ENCODE measurements at regions of chr16 and their contacts with region 1.

Region 1: DNA sequence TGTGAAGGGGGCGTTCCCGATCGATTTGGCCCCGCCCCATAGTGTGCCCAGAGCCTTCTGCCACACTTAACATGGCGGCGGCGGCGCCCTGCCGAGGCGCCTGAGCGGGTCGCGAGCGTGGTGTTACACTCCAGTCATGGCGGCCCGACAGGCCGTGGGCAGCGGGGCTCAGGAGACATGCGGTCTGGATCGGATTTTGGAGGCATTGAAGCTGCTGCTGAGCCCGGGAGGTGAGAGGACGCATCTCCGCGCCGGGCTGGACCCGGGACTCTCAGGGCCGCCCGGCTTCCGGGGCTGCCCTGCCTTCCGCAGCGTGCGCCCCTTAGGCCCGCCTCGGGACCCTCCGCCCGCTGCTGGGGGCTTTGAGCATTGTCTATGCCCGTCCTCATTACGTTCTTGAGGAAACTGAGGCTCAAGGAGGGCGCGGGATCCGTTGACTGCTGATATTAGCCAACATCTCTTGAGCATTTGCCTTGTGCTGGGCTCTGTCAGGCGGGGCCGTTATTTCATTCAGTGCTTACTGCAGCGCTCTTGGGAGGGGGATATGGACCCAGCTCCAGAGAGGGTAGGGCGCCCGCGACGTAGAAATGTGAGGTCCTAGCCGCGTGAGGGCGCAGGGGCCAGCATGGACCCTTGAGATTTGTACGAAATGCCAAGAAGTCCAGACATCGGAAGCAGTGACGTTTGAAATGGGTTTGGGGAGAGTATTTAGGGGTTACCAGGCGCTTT is at the start of gene TANGO6:
- DNase-seq: no peak
- H3K4me3 ChIP-seq: peak within 1 kb of the TSS; percentile 89
- H3K27ac ChIP-seq: peak within 1 kb of the TSS; percentile 85
- H3K27me3 ChIP-seq: no peaks in the 10 kb centered on the region
- CTCF ChIP-seq: peak; percentile 49
- polyA plus RNA-seq, gene TANGO6: 11.6 and 16.2 TPM in 2 replicates

Region 2: GRCh38 chr16:68528686-68529379 is 314.8 kb before region 1 on chr16:
- CTCF ChIA-PET with region 1: interaction called, 23 read pairs
- POLR2A ChIA-PET with region 1: no interaction called
- DNase-seq: peak; percentile 44
- H3K4me3 ChIP-seq: no peak overlapping the region
- H3K27ac ChIP-seq: no peak overlapping the region
- H3K27me3 ChIP-seq: no peaks in the 10 kb centered on the region
- CTCF ChIP-seq: peak; percentile 83

Region 3: GRCh38 chr16:68800257-68800875 is 43.3 kb before region 1 on chr16:
- CTCF ChIA-PET with region 1: interaction called, 14 read pairs
- POLR2A ChIA-PET with region 1: no interaction called
- DNase-seq: peak; percentile 66
- H3K4me3 ChIP-seq: no peak overlapping the region
- H3K27ac ChIP-seq: no peak overlapping the region
- H3K27me3 ChIP-seq: peaks cover 6% of the 10 kb centered on the region
- CTCF ChIP-seq: peak; percentile 89

Region 4: DNA sequence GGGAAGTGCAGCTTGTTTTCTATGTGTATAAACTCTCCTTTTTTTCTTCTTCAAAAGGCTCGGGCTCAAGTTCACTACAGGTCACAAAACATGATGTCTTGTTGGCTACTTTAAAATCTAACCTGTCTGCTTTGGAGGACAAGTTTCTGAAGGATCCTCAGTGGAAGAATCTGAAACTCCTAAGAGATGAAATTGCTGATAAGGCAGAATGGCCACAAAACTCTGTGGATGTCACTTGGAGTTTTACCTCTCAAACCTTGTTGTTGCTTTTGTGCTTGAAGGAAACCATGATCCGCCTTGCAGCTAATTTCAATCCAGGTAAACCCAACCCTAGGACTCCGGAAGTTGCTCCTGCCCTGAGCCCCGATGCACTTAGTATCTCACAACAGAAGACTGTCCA is 16.2 kb after region 1 on chr16:
- CTCF ChIA-PET with region 1: interaction called, 16 read pairs
- POLR2A ChIA-PET with region 1: no interaction called
- DNase-seq: no peak
- H3K4me3 ChIP-seq: no peak overlapping the region
- H3K27ac ChIP-seq: no peak overlapping the region
- H3K27me3 ChIP-seq: no peaks in the 10 kb centered on the region
- CTCF ChIP-seq: no peak

Region 5: DNA sequence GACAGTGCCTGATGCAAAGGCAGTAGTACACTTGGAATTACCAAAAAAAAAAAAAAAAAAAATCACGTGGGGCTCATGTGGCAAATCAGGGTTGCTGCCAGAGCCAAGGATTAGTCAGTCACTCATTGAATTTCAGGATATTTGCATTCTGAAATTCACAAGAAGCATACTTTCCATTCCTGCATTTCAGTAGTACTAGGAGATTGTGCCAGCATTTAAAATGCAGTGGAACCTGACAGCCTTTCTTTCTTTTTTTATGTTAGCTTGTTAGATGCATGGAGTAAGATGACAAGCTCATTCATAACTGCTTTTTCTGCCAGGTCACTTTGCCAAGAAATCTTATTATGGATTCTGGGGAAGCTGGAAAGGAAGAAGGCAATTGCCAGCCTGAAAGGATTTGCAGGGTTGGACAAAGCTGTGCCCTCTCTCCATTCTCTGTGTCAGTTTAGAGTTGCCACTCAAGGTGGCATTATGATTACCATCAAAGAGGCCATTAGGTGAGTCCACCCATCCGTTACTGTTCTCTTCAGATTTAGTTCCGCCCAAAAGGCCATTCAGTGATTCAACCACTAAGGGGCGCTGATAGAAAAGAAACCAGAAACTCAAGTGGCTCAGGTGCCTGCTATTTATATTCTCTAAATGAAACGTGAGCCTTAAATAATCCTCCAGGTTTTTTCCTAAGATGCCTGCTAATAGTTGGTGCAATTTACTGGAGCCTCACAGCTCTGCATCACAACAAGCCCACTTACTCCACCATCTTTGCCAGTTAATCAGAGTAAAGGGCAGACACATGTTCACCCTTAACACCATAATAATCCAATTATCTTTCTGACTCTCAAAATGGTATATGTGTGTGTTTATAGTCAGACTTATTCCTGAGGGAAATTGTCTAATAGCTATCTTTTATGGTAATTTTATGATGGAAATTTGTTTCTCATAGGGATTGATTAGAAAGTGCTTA is 58.6 kb after region 1 on chr16:
- CTCF ChIA-PET with region 1: interaction called, 14 read pairs
- POLR2A ChIA-PET with region 1: no interaction called
- DNase-seq: peak; percentile 37
- H3K4me3 ChIP-seq: no peak overlapping the region
- H3K27ac ChIP-seq: no peak overlapping the region
- H3K27me3 ChIP-seq: no peaks in the 10 kb centered on the region
- CTCF ChIP-seq: peak; percentile 81

Region 6: DNA sequence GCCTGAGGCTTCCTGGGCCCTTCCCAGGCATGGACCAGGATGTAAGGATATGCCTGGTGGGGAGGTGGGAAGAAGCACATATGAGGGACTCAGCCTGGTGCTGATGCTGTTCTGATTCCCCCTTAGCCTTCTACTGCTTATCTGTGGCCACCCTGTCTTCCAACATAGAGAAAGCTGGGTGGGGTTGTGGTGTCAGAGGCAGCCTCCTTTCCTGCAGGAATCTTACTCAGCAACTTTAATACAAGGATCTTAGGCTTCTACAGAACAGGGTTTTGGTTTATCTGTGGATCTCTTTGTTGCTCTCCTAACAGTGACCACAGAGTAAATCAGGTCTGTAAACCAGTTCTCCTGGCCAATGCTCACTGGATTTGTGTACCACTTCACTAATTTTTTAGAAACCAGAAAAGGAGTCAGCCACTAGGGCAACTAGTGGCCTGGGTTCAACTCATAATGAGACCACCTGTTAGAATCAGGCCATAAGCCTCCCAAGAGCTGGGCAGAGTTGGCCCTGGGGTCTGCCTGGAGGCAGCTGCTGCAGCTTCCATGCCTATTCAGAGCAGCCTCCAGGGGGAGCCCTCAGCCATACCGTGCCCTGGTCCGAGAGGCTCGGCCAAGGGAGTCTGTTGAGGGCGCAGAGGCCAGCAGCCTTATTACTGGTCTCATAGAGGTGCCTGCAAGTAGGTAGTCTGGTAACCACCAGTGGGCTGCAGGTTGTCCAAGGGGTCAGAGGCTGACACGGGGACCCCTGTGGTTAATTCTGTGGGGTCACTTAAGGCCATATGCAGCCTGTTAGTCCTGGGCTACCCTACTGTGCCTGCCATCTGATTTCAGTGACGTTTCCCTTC is 268.9 kb after region 1 on chr16:
- CTCF ChIA-PET with region 1: interaction called, 22 read pairs
- POLR2A ChIA-PET with region 1: no interaction called
- DNase-seq: no peak
- H3K4me3 ChIP-seq: no peak overlapping the region
- H3K27ac ChIP-seq: no peak overlapping the region
- H3K27me3 ChIP-seq: peaks cover 2% of the 10 kb centered on the region
- CTCF ChIP-seq: peak; percentile 81

Region 7: GRCh38 chr16:69132424-69133252 is 289.0 kb after region 1 on chr16 and contains the starts of genes CHTF8 and UTP4:
- CTCF ChIA-PET with region 1: interaction called, 11 read pairs
- POLR2A ChIA-PET with region 1: no interaction called
- DNase-seq: peak; percentile 16
- H3K4me3 ChIP-seq: peak within 1 kb of the TSS; percentile 91
- H3K27ac ChIP-seq: peak within 1 kb of the TSS; percentile 78
- H3K27me3 ChIP-seq: no peaks in the 10 kb centered on the region
- CTCF ChIP-seq: no peak
- polyA plus RNA-seq, gene CHTF8: 84.8 and 112 TPM in 2 replicates
- polyA plus RNA-seq, gene UTP4: 54.2 and 54.3 TPM in 2 replicates

Measured in AG04450 (cell line).